Transverse colon (tissue), 4 donors: ENCODE measurements at regions of chr2 and their contacts with region 1.

Region 1: GRCh38 chr2:25131567-25132298 is 36.6 kb downstream of the POMC start:
- DNase-seq: peak; percentile 65
- H3K4me3 ChIP-seq: peak overlapping the region in 2 of 4 donors; percentile 28 to 36
- H3K27ac ChIP-seq: no peak overlapping the region
- H3K4me1 ChIP-seq: peaks cover 0 to 13% (median 11%) of the 10 kb centered on the region in 4 donors
- H3K27me3 ChIP-seq: peaks cover 16% of the 10 kb centered on the region
- CTCF ChIP-seq: no peak
- EP300 ChIP-seq: no peak
- POLR2A ChIP-seq: no peak

Region 2: DNA sequence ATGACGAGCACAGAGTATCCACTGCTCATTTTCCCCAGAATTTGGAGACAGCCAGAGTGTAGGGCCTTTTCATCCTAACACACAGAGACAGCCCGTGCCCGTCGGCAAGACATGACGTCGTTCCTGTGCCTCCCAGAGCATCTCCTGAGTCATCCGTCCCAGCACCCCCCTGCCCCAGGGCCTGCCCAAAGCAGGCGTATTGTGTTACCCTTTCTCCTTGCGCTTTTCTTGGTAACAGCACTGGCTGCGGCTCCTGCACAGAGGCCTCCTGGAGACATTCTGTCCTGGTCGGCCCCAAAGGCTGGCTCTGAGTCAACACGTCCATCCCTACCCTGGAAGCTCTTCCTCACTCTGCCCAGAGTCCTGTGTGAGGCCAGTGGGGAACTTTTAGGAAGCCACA is 1529.6 kb before region 1 on chr2:
- in situ Hi-C with region 1: no loop called
- intact Hi-C with region 1: no loop called
- DNase-seq: peak; percentile 55
- H3K4me3 ChIP-seq: no peak overlapping the region
- H3K27ac ChIP-seq: peak overlapping the region; percentile 58 to 84 (median 82)
- H3K4me1 ChIP-seq: peaks cover 0 to 5% (median 1%) of the 10 kb centered on the region in 4 donors
- H3K27me3 ChIP-seq: no peaks in the 10 kb centered on the region
- CTCF ChIP-seq: no peak
- EP300 ChIP-seq: peak; percentile 95
- POLR2A ChIP-seq: no peak

Region 3: GRCh38 chr2:24409700-24410556 is 721.8 kb before region 1 on chr2:
- in situ Hi-C with region 1: loop called in 2 of 4 experiments (anchors 25 kb)
- intact Hi-C with region 1: no loop called
- DNase-seq: peak; percentile 24
- H3K4me3 ChIP-seq: no peak overlapping the region
- H3K27ac ChIP-seq: no peak overlapping the region
- H3K4me1 ChIP-seq: peaks cover 0 to 5% (median 0%) of the 10 kb centered on the region in 4 donors
- H3K27me3 ChIP-seq: no peaks in the 10 kb centered on the region
- CTCF ChIP-seq: peak; percentile 77 to 85 (median 83)
- EP300 ChIP-seq: no peak
- POLR2A ChIP-seq: no peak

Region 4: DNA sequence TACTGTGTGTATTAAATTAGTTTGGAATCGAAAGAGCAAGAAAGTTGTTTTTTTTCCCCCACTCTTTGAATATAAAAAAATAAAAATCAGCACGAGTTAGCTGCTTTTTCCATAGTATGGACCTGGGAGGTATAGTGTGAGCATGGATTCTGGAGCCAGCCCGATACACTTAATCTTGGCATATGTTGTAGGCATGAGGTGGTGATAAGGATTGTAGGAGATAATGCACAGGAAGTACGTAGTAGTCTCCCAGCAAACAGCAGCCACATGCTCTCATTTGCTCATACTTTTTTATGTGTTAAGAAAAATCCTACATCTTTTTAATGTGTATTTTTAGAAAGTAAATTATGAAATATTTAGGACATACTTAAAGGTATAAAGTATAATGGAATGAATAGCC is 157.9 kb before region 1 on chr2:
- in situ Hi-C with region 1: loop called in 1 of 4 experiments (anchors 5 kb)
- intact Hi-C with region 1: loop called (anchors 2 kb)
- DNase-seq: no peak
- H3K4me3 ChIP-seq: no peak overlapping the region
- H3K27ac ChIP-seq: peak overlapping the region in 1 of 4 donors; percentile 97
- H3K4me1 ChIP-seq: peaks cover 4 to 22% (median 7%) of the 10 kb centered on the region in 4 donors
- H3K27me3 ChIP-seq: no peaks in the 10 kb centered on the region
- CTCF ChIP-seq: no peak
- EP300 ChIP-seq: no peak
- POLR2A ChIP-seq: no peak

Region 5: DNA sequence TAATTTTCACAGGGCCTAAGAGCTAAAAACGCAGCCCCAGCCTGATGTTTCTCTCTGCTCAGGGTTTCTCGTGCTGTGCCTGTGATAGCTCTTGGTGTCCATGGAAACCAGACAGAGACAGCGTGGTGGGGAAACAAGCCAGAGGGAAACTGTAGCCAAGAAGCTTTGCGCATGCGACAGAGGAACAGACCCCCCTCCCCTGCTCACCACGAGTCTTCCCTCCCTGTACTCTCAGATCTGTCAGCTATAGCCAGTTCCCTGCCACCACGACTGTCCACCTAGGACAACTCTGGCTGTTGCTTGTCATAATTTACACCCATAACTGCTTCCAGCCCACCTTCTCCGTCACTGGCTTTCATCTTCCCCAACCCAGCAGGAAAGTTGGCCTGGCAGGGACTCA is 146.8 kb before region 1 on chr2:
- in situ Hi-C with region 1: loop called in 2 of 4 experiments (anchors 10 kb)
- intact Hi-C with region 1: no loop called
- DNase-seq: peak; percentile 18
- H3K4me3 ChIP-seq: no peak overlapping the region
- H3K27ac ChIP-seq: peak overlapping the region in 3 of 4 donors; percentile 26 to 60 (median 59)
- H3K4me1 ChIP-seq: peaks cover 0 to 16% (median 7%) of the 10 kb centered on the region in 4 donors
- H3K27me3 ChIP-seq: no peaks in the 10 kb centered on the region
- CTCF ChIP-seq: no peak
- EP300 ChIP-seq: no peak
- POLR2A ChIP-seq: no peak

Region 6: GRCh38 chr2:25078171-25079049 is 53.3 kb before region 1 on chr2:
- in situ Hi-C with region 1: no loop called
- intact Hi-C with region 1: no loop called
- DNase-seq: no peak
- H3K4me3 ChIP-seq: no peak overlapping the region
- H3K27ac ChIP-seq: peak overlapping the region in 3 of 4 donors; percentile 15 to 52 (median 28)
- H3K4me1 ChIP-seq: peaks cover 0 to 16% (median 7%) of the 10 kb centered on the region in 4 donors
- H3K27me3 ChIP-seq: no peaks in the 10 kb centered on the region
- CTCF ChIP-seq: no peak
- EP300 ChIP-seq: no peak
- POLR2A ChIP-seq: no peak